ENCODE measurements at regions of chr20 and their contacts with region 1.

Region 1: DNA sequence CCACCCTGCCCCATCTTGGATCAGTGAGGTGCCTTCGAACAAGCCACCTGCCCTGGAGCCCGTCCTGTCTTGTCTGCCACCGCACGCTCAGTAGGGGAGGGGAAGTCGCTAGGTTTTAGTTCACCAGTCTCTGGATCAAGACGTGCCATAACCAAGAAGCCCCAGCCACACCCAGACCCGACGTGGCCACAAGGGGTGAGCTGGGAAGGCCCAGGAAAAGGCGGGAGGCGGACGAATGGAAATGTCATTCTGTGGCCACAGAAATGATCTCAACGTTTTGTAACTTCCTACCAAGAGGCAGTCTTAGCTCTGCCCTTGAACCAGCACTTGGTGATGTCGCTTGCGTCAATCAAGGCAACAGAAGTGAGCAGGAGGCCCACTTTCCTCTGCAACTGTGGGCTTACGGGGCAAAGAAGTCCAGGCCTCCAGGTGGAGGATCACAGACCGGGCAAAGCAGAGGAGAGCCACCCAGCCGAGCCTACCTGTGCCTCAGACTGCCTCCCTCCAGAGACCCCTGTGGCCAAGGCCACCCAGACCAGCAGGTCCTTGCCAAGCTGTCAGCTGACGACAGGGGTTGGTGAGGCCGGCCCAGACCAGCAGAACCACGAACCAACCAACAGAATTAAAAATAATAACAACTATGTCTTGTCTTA is 14.5 kb downstream of the GMEB2 start:
- DNase-seq: no peak
- H3K4me3 ChIP-seq: no peak overlapping the region
- H3K27ac ChIP-seq: no peak overlapping the region
- H3K4me1 ChIP-seq: no peaks in the 10 kb centered on the region
- H3K27me3 ChIP-seq: no peaks in the 10 kb centered on the region
- CTCF ChIP-seq: no peak
- EP300 ChIP-seq: no peak
- POLR2A ChIP-seq: no peak
- RAD21 ChIP-seq: no peak

Region 2: GRCh38 chr20:63597651-63598478 is 14.5 kb before region 1 on chr20:
- CTCF ChIA-PET with region 1: interaction called, 13 read pairs
- POLR2A ChIA-PET with region 1: no interaction called
- DNase-seq: no peak
- H3K4me3 ChIP-seq: no peak overlapping the region
- H3K27ac ChIP-seq: no peak overlapping the region
- H3K4me1 ChIP-seq: no peaks in the 10 kb centered on the region
- H3K27me3 ChIP-seq: no peaks in the 10 kb centered on the region
- CTCF ChIP-seq: no peak
- EP300 ChIP-seq: no peak
- POLR2A ChIP-seq: no peak
- RAD21 ChIP-seq: no peak

Region 3: DNA sequence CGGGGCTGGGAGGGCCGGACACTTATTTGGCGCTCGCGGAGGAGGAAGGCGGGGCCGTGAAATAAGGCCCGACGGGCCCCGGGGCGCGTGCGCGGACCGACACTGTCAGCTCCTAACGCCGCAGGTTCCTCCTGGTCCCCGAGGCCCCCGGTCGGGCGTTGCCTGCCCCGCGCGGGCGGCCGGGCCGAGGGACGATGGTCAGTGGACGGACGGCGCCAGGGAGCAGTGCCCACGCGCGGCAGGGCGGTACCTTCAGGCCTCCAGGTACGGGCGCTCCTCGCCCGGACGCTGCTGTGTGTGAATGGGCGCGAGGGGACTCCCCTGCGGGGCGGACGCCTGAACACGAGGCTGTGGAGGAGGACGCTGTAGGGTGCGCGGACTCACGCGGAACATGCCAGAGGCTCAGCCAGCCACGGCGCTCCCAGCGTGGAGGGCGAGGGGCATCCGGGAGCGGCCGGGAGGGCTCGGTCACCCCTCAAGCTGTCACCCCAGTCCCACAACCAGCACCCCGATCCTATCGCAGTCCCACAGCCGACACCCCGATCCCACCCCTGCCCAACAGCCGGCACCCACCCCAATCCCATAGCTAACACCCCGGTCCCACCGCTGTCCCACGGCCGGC is 14.8 kb after region 1 on chr20:
- CTCF ChIA-PET with region 1: interaction called, 11 read pairs
- POLR2A ChIA-PET with region 1: interaction called, 4 read pairs
- DNase-seq: peak; percentile 54 to 95
- H3K4me3 ChIP-seq: peak overlapping the region; percentile 75 to 99 (median 92)
- H3K27ac ChIP-seq: peak overlapping the region; percentile 68; the same call in 1 of the 2 replicates
- H3K4me1 ChIP-seq: peaks cover 0 to 3% (median under 1%) of the 10 kb centered on the region in 4 experiments; a peak in 3 of 7 replicates
- H3K27me3 ChIP-seq: no peaks in the 10 kb centered on the region
- CTCF ChIP-seq: no peak
- EP300 ChIP-seq: no peak
- POLR2A ChIP-seq: no peak
- RAD21 ChIP-seq: no peak

Region 4: GRCh38 chr20:63675681-63676368 is 63.4 kb after region 1 on chr20:
- CTCF ChIA-PET with region 1: no interaction called
- POLR2A ChIA-PET with region 1: no interaction called
- DNase-seq: no peak
- H3K4me3 ChIP-seq: no peak overlapping the region
- H3K27ac ChIP-seq: no peak overlapping the region
- H3K4me1 ChIP-seq: no peaks in the 10 kb centered on the region
- H3K27me3 ChIP-seq: no peaks in the 10 kb centered on the region
- CTCF ChIP-seq: no peak
- EP300 ChIP-seq: no peak
- POLR2A ChIP-seq: no peak
- RAD21 ChIP-seq: no peak